ENCODE measurements at regions of chr12 and their contacts with region 1.

Region 1: DNA sequence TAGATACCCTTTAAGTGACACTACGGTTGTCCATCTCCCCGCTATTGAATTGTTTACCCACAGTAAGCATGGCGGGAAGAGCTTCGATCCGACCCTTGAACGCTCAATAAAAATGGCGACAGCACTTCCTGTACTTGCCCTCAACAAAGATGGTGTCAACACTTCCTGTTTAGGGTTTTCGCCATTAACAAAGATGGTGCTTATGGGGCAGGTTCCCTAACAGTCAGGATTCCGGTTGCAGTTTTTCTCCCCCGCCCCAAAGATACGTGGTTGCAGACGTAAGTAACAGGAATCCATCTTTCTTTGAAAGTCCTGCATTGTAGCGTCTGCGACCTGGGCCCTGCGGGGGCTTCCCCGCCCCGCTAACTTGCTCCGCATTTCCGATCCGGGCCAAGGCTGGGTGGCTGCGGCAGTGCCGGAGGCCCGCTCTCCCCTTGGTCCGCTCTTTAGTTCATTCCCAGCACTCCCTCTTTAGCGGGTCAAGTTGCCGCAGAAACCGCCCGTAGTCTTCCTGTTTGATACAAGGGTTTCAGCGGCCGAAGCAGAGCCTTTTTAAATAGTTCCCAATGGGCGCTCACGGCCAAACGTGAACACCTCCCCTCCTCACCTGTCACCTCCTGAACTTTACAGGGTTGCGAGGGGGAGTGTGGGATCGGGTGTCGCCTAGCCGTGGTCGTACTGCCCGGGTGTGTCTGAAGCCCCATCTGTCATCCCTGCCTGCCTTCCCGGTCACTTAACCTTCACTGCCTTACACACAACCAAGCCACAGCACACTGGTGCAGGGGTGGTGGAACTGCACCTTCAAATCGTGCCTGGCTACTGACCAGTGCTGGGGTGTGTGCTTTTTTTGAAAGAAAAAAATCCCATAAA is at the start of gene CRADD:
- DNase-seq: peak; percentile 80
- ATAC-seq: peak; percentile 94
- total RNA-seq, gene CRADD: 35.8 TPM

Region 2: DNA sequence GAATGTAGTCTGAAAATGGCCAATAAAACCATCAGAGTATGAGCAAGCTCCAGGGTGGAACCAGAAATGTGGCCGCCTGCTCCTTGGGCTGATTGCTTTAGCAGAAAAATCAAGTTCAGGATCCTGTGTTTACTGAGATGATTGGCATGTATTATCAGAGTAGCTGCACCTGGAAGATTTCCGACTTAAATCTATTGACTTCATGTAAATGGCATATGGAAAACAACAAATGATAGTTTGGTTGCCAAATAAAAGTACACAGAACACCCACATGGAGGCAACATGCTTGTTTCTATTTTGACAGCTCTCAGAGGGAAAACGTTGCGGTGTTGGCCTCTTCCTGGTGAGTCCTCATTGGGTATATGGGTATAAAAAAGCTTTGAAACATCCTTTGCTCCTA is 73.7 kb before region 1 on chr12:
- intact Hi-C with region 1: loop called (anchors 10 kb)
- DNase-seq: no peak
- ATAC-seq: peak; percentile 60

Region 3: GRCh38 chr12:93742110-93742934 is 64.9 kb after region 1 on chr12:
- intact Hi-C with region 1: loop called (anchors 5 kb)
- DNase-seq: peak; percentile 87
- ATAC-seq: peak; percentile 94